ENCODE measurements at regions of chr2 and their contacts with region 1.

Region 1: GRCh38 chr2:54704688-54705605 is 18.5 kb upstream of the EML6 start:
- DNase-seq: peak; percentile 71
- H3K4me3 ChIP-seq: no peak overlapping the region
- H3K27ac ChIP-seq: no peak overlapping the region
- H3K4me1 ChIP-seq: peaks cover 8% of the 10 kb centered on the region
- H3K27me3 ChIP-seq: peaks cover 0 to 9% of the 10 kb centered on the region in 2 experiments
- CTCF ChIP-seq: peak; percentile 14 to 20
- POLR2A ChIP-seq: no peak

Region 2: GRCh38 chr2:53422979-53423378 is 1282.0 kb before region 1 on chr2:
- CTCF ChIA-PET with region 1: interaction called, 6 read pairs
- POLR2A ChIA-PET with region 1: no interaction called
- dilution Hi-C with region 1: no loop called
- intact Hi-C with region 1: loop called (anchors 10 kb)
- DNase-seq: peak; percentile 26
- H3K4me3 ChIP-seq: no peak overlapping the region
- H3K27ac ChIP-seq: no peak overlapping the region
- H3K4me1 ChIP-seq: no peaks in the 10 kb centered on the region
- H3K27me3 ChIP-seq: no peaks in the 10 kb centered on the region
- CTCF ChIP-seq: peak; percentile 30 to 47
- POLR2A ChIP-seq: no peak

Region 3: DNA sequence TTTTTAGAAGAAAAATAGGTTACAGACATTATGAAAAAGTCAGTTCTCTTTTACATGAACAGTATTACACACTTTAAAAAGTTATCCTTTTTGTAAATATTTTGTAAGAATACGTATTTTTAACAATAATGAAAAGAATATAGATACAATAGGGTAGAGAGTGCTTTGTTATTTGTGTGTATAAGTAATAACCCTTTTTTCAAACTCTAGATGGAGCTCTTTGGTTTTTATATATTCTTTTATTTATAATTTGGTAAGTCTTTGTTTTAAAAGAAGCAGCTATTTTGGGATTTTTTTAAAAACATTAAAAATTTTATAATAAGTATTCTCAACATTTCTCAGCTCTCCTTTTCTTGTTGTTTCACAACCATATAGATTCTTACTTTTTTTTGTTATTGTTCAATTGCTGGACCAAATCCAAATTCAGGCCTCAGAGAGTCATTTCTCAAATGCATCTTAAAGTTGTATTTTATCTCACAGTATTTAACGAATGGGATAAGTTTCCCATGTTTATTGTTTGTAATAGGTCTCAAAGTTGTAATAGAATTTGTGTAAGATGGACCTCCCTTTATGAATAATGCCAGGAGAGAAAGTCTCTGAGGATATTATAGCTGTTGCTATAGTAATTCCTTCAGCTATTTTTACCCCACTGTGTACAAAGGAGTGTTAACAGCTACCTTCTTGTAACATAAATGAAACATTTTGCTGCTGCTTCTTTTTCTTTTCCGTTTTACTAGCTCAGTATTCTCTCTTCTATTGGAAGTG is 543.1 kb before region 1 on chr2:
- CTCF ChIA-PET with region 1: interaction called, 30 read pairs
- POLR2A ChIA-PET with region 1: no interaction called
- dilution Hi-C with region 1: no loop called
- intact Hi-C with region 1: no loop called
- DNase-seq: peak; percentile 22
- H3K4me3 ChIP-seq: no peak overlapping the region
- H3K27ac ChIP-seq: no peak overlapping the region
- H3K4me1 ChIP-seq: no peaks in the 10 kb centered on the region
- H3K27me3 ChIP-seq: no peaks in the 10 kb centered on the region
- CTCF ChIP-seq: no peak
- POLR2A ChIP-seq: no peak

Region 4: DNA sequence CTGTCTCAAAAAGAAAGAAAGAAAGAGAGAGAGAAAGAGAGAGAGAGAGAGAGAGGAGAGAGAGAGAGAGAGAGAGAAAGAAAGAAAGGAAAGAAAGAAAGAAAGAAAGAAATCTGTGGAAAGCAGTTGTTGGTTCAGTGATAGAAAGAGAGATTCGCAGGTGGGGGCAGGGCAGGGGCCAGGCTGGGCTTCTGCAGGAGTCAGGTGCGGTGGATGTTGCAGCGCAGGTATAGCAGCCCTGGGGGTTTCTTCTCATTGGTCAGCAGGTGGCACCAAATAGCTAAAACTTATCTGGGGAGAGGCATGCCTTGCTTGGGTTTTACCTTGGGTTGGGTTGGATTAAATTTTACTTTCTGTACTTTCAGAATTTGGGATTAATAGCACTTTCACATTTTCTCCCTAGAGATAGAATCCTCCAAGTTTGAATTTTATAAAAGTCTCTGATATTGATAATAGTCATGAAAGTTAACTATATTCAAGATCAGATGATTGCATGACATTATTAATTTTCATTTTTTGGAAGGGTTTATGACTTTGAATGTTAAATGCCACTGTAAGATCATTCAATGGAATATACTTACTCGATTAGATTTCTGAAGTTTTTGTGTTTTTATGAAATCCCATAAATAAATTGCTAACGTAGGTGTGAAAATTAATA is 182.2 kb before region 1 on chr2:
- CTCF ChIA-PET with region 1: interaction called, 79 read pairs
- POLR2A ChIA-PET with region 1: no interaction called
- dilution Hi-C with region 1: no loop called
- intact Hi-C with region 1: loop called (anchors 1 kb)
- DNase-seq: peak; percentile 44
- H3K4me3 ChIP-seq: no peak overlapping the region
- H3K27ac ChIP-seq: no peak overlapping the region
- H3K4me1 ChIP-seq: peaks cover 10% of the 10 kb centered on the region
- H3K27me3 ChIP-seq: no peaks in the 10 kb centered on the region
- CTCF ChIP-seq: peak; percentile 48 to 68
- POLR2A ChIP-seq: no peak

Region 5: GRCh38 chr2:54665436-54665856 is 39.5 kb before region 1 on chr2:
- CTCF ChIA-PET with region 1: interaction called, 295 read pairs
- POLR2A ChIA-PET with region 1: no interaction called
- dilution Hi-C with region 1: no loop called
- intact Hi-C with region 1: loop called (anchors 1 kb)
- DNase-seq: peak; percentile 76
- H3K4me3 ChIP-seq: no peak overlapping the region
- H3K27ac ChIP-seq: no peak overlapping the region
- H3K4me1 ChIP-seq: peaks cover 16% of the 10 kb centered on the region
- H3K27me3 ChIP-seq: no peaks in the 10 kb centered on the region
- CTCF ChIP-seq: peak; percentile 74
- POLR2A ChIP-seq: no peak

Region 6: GRCh38 chr2:54691445-54692135 is 13.4 kb before region 1 on chr2:
- CTCF ChIA-PET with region 1: interaction called, 40 read pairs
- POLR2A ChIA-PET with region 1: no interaction called
- dilution Hi-C with region 1: no loop called
- intact Hi-C with region 1: no loop called
- DNase-seq: no peak
- H3K4me3 ChIP-seq: no peak overlapping the region
- H3K27ac ChIP-seq: no peak overlapping the region
- H3K4me1 ChIP-seq: no peaks in the 10 kb centered on the region
- H3K27me3 ChIP-seq: peaks cover 3 to 4% of the 10 kb centered on the region in 2 experiments
- CTCF ChIP-seq: no peak
- POLR2A ChIP-seq: no peak